ENCODE measurements at regions of chr6 and their contacts with region 1.

Region 1: GRCh38 chr6:4936681-4937041 is 67.2 kb downstream of the RPP40 start:
- DNase-seq: peak; percentile 77
- H3K4me3 ChIP-seq: no peak overlapping the region
- H3K27ac ChIP-seq: peak overlapping the region; percentile 38
- H3K4me1 ChIP-seq: peaks cover 87% of the 10 kb centered on the region
- H3K27me3 ChIP-seq: no peaks in the 10 kb centered on the region
- CTCF ChIP-seq: peak; percentile 76

Region 2: DNA sequence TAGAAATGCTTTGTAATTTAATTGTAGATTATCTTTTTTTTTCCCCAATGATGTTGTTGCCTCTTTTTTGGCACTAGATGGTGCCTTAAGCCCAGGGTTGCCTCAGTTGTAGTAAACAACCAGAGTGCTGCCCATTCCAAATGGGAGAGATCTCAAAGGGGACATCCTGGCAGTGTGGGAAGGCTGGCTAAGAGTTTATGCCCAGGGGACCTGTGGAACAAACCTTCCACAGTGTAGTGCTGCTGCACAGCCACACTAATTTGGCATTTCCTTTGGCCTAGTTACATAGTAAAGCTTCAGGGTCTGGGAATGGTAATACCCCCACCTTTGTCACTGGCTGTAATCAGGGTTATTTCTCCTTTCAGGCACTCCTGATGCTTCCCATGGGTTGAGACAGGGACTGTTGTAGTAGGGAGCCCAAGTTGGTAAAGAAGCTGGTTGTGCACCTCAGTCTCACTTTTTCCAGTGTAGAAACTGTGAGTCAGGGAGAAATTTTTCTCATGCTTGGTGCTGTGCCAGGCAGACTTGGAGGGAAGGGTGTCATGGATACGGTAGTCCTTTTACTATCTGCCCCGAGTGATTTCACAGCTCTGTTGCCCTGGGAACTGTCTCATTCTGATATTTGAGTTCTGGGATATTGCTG is 623.5 kb before region 1 on chr6:
- CTCF ChIA-PET with region 1: no interaction called
- POLR2A ChIA-PET with region 1: no interaction called
- intact Hi-C with region 1: loop called (anchors 1 kb)
- DNase-seq: peak; percentile 80
- H3K4me3 ChIP-seq: no peak overlapping the region
- H3K27ac ChIP-seq: peak overlapping the region; percentile 41
- H3K4me1 ChIP-seq: peaks cover 20% of the 10 kb centered on the region
- H3K27me3 ChIP-seq: no peaks in the 10 kb centered on the region
- CTCF ChIP-seq: peak; percentile 70

Region 3: GRCh38 chr6:4441981-4442440 is 494.6 kb before region 1 on chr6:
- CTCF ChIA-PET with region 1: no interaction called
- POLR2A ChIA-PET with region 1: no interaction called
- intact Hi-C with region 1: no loop called
- DNase-seq: no peak
- H3K4me3 ChIP-seq: no peak overlapping the region
- H3K27ac ChIP-seq: no peak overlapping the region
- H3K4me1 ChIP-seq: no peaks in the 10 kb centered on the region
- H3K27me3 ChIP-seq: no peaks in the 10 kb centered on the region
- CTCF ChIP-seq: no peak

Region 4: DNA sequence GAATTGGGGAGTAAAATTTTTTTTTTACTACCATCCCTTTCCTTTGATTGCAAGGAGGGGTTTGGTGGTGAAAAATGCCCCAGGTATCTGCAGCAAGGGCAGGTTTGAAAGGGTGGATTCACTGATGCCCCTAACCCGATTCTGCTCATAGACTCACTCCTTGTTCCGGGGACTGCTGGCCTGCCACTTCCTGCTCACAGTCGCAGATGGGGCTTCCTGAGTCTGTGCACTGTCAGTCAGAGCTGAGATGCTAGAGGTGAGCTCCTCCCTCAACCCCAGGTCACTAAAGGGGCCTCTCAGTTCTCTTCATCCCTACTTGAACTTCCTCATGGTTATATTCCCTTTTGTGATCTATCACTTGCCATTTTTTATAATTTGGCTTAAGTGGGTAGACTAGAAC is 682.6 kb after region 1 on chr6:
- CTCF ChIA-PET with region 1: no interaction called
- POLR2A ChIA-PET with region 1: no interaction called
- intact Hi-C with region 1: no loop called
- DNase-seq: no peak
- H3K4me3 ChIP-seq: no peak overlapping the region
- H3K27ac ChIP-seq: no peak overlapping the region
- H3K4me1 ChIP-seq: no peaks in the 10 kb centered on the region
- H3K27me3 ChIP-seq: no peaks in the 10 kb centered on the region
- CTCF ChIP-seq: no peak

Measured in A673 (cell line).